Psoas muscle (tissue), 8 donors: ENCODE measurements at regions of chr4 and their contacts with region 1.

Region 1: GRCh38 chr4:168335621-168336020 is 17.1 kb upstream of the DDX60 start:
- DNase-seq: no peak
- ATAC-seq: peak; percentile 94 to 99 (median 98)
- H3K4me3 ChIP-seq: no peak overlapping the region
- H3K27ac ChIP-seq: peak overlapping the region; percentile 77
- H3K4me1 ChIP-seq: peaks cover 5% of the 10 kb centered on the region
- H3K27me3 ChIP-seq: no peaks in the 10 kb centered on the region
- CTCF ChIP-seq: no peak

Region 2: GRCh38 chr4:168183717-168184608 is 151.7 kb before region 1 on chr4:
- intact Hi-C with region 1: loop called in 1 of 2 experiments (anchors 10 kb)
- DNase-seq: no peak
- ATAC-seq: peak; percentile 50 to 77 (median 64)
- H3K4me3 ChIP-seq: no peak overlapping the region
- H3K27ac ChIP-seq: no peak overlapping the region
- H3K4me1 ChIP-seq: no peaks in the 10 kb centered on the region
- H3K27me3 ChIP-seq: no peaks in the 10 kb centered on the region
- CTCF ChIP-seq: peak; percentile 74

Region 3: DNA sequence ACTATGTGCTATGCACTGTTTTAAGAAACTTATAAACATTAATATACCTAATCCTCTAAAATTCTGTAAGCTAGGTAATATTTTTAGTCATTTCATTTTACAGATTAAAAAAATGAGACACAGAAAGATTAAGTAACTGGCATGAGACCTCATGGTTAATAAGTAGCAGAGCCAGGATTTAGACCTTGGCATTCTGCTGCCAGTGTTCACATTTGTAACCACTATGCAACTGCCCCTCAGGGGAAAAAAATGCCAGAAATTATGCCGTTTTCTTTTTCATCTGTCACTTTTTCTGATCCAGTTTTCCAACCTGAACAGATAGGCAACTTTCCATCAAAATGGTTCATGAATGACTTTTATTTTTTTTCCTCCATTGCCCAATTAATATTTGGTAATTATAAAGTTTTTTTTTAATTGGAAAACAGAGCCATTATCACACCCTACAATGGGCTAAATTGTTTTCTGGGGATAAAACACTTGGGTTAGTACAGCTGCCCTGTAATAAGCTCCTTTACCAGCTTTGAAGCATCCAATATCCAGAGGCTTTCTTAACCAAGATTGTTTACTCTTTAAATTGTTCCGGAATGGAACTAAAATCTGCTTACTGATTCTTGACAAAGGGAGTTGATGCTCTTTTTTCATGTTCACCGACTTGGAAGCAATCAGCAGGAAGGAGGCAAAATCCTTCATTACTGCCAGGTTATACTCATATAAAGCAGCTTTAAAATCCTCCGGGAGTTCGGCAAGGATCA is 39.3 kb after region 1 on chr4:
- intact Hi-C with region 1: loop called in 1 of 2 experiments (anchors 1 kb)
- DNase-seq: no peak
- ATAC-seq: no peak
- H3K4me3 ChIP-seq: no peak overlapping the region
- H3K27ac ChIP-seq: no peak overlapping the region
- H3K4me1 ChIP-seq: no peaks in the 10 kb centered on the region
- H3K27me3 ChIP-seq: no peaks in the 10 kb centered on the region
- CTCF ChIP-seq: no peak

Region 4: GRCh38 chr4:168385142-168385490 is 49.5 kb after region 1 on chr4:
- intact Hi-C with region 1: no loop called
- DNase-seq: no peak
- ATAC-seq: no peak
- H3K4me3 ChIP-seq: no peak overlapping the region
- H3K27ac ChIP-seq: no peak overlapping the region
- H3K4me1 ChIP-seq: no peaks in the 10 kb centered on the region
- H3K27me3 ChIP-seq: no peaks in the 10 kb centered on the region
- CTCF ChIP-seq: no peak

Region 5: GRCh38 chr4:168475745-168476144 is 140.1 kb after region 1 on chr4:
- intact Hi-C with region 1: no loop called
- DNase-seq: no peak
- ATAC-seq: no peak
- H3K4me3 ChIP-seq: no peak overlapping the region
- H3K27ac ChIP-seq: no peak overlapping the region
- H3K4me1 ChIP-seq: peaks cover 5% of the 10 kb centered on the region
- H3K27me3 ChIP-seq: no peaks in the 10 kb centered on the region
- CTCF ChIP-seq: no peak